Lower leg skin (tissue), 4 donors: ENCODE measurements at regions of chr2 and their contacts with region 1.

Region 1: DNA sequence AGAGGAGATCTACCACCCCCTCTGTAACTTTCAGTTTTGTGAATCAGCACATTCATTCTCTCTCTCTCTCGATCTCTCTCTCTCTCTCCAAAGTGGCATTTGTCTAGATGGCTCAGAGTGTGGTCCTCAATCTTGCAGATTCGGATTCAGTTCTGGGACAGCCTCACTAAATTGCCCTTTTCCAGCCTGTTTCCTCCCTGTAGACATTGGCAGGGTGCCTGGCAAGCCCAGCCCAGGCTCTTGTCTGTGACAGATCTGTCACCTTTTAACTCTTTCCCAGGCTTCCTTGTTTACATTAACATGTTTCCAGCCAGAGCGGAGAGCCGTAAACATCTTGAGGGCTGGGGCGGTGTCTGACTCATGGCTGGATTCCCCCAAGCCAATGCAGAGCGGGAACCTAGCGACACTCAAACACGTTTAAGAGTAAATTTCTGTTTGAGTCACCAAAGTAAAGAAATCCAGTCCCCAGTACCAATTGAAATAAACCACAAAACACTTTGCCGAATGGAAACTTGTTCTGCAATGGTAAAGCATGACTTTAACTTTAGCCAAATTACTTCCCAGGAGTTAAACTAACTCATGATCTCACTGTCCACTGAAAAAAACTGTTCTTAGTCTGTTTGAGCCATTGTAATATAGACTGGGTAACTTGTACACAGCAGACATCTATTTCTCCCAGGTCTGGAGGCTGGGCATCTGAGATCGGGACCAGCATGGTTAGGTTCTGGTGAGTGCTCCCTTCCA is 6.6 kb upstream of the CYP27C1 start:
- DNase-seq: peak in 1 of 2 donors; percentile 82
- H3K4me3 ChIP-seq: no peak overlapping the region
- CTCF ChIP-seq: no peak
- POLR2A ChIP-seq: no peak

Region 2: DNA sequence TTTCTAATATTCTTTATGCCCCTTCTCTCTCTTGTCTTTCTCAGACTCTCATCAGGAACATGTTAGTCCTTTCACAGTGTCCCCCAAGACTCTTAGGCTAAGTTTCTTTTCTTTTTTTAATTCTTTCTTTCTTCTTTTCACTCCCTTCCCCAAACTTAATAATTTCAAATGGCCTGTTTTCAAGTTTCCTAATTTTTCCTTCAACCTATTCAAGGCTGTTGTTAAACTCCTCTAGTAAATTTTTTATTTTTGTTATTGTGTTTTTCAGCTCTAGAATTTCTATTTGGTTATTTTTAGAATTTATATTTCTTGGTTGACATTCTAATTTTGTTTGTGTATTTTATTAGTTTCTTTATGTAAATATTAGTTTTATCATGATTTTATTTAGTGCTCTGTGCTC is 807.3 kb before region 1 on chr2:
- intact Hi-C with region 1: no loop called
- DNase-seq: no peak
- H3K4me3 ChIP-seq: no peak overlapping the region
- CTCF ChIP-seq: no peak
- POLR2A ChIP-seq: no peak

Region 3: DNA sequence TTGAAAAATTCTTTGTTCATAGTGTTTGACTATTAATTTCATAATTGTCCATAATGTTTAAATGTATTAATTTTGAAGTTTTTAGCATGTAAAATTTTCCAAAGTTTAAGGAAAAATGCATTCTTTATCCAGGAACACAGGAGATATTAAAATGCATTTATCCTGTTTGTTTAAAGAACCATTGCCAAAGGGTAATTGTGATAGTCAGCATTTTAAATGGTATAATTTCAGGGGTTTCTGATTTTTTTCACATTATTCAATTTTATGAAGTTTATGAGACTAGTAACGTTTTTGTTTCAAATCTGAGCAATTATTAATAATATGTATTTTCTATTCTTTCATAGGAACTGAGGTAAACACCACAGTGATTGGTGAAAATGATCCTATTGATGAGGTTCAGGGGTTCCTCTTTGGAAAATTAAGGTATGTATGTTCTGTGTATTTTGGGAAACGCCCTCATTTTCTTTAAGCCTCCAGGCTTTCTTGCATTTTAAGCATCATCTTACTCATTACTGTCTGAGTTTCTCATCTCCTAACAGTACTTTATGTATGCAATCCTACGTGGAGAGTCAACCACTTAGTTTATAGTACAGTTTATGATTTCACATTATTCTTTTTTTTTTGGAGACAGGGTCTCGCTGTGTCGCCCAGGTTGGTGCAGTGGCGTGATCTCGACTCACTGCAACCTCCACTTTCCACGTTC is 889.4 kb after region 1 on chr2:
- intact Hi-C with region 1: loop called (anchors 10 kb)
- DNase-seq: no peak
- H3K4me3 ChIP-seq: no peak overlapping the region
- CTCF ChIP-seq: no peak
- POLR2A ChIP-seq: no peak